ENCODE measurements at regions of chr12 and their contacts with region 1.

Region 1: GRCh38 chr12:122635471-122635870 is 67.7 kb downstream of the HCAR2 start:
- DNase-seq: no peak
- H3K4me3 ChIP-seq: no peak overlapping the region
- H3K27ac ChIP-seq: no peak overlapping the region
- H3K4me1 ChIP-seq: no peaks in the 10 kb centered on the region
- H3K27me3 ChIP-seq: no peaks in the 10 kb centered on the region
- CTCF ChIP-seq: no peak

Region 2: GRCh38 chr12:122293081-122293480 is 342.4 kb before region 1 on chr12:
- CTCF ChIA-PET with region 1: no interaction called
- dilution Hi-C with region 1: no loop called
- in situ Hi-C with region 1: no loop called
- intact Hi-C with region 1: no loop called
- DNase-seq: no peak
- H3K4me3 ChIP-seq: no peak overlapping the region
- H3K27ac ChIP-seq: no peak overlapping the region
- H3K4me1 ChIP-seq: no peaks in the 10 kb centered on the region
- H3K27me3 ChIP-seq: no peaks in the 10 kb centered on the region
- CTCF ChIP-seq: no peak

Region 3: GRCh38 chr12:122593910-122594309 is 41.6 kb before region 1 on chr12:
- CTCF ChIA-PET with region 1: no interaction called
- dilution Hi-C with region 1: loop called (anchors 5 kb)
- in situ Hi-C with region 1: no loop called
- intact Hi-C with region 1: no loop called
- DNase-seq: no peak
- H3K4me3 ChIP-seq: no peak overlapping the region
- H3K27ac ChIP-seq: no peak overlapping the region
- H3K4me1 ChIP-seq: no peaks in the 10 kb centered on the region
- H3K27me3 ChIP-seq: no peaks in the 10 kb centered on the region
- CTCF ChIP-seq: no peak

Region 4: GRCh38 chr12:122752464-122753318 is 117.2 kb after region 1 on chr12 and contains the start of gene DENR:
- CTCF ChIA-PET with region 1: interaction called, 12 read pairs
- dilution Hi-C with region 1: no loop called
- in situ Hi-C with region 1: loop called (anchors 5 kb)
- intact Hi-C with region 1: loop called (anchors 1 kb)
- DNase-seq: peak; percentile 99
- H3K4me3 ChIP-seq: peak within 1 kb of the TSS; percentile 70 to 80 (median 78)
- H3K27ac ChIP-seq: peak within 1 kb of the TSS; percentile 66
- H3K4me1 ChIP-seq: peaks cover 14% of the 10 kb centered on the region
- H3K27me3 ChIP-seq: no peaks in the 10 kb centered on the region
- CTCF ChIP-seq: peak; percentile 88 to 92
- total RNA-seq, gene DENR: 42.5 to 73.0 TPM

Region 5: DNA sequence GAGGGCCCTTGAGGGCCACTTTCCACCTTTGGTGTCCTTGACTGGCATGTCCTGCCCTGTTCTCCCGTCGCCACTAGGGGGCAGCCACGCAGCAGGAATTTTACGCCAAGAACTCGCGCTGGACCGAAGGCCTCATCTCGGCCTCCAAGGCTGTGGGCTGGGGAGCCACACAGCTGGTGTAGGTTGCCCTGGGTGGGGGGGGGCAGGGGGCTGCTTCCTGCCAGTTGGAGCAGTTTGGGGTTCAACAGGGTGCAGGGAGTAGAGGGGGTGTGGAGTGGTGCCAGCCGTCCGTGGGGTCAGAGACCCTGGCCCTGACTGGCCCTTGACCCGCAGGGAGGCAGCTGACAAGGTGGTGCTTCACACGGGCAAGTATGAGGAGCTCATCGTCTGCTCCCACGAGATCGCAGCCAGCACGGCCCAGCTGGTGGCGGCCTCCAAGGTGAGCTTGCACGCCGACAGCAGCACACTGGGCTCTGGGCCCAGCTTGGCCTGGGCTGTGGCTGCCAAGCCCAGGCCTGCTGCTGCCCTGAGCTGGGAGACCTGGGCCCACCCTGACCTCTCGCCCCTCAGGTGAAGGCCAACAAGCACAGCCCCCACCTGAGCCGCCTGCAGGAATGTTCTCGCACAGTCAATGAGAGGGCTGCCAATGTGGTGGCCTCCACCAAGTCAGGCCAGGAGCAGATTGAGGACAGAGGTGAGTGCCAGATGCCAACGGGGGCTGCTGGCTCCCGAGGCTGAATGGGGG is 225.0 kb after region 1 on chr12:
- CTCF ChIA-PET with region 1: no interaction called
- dilution Hi-C with region 1: no loop called
- in situ Hi-C with region 1: no loop called
- intact Hi-C with region 1: loop called (anchors 5 kb)
- DNase-seq: peak; percentile 64
- H3K4me3 ChIP-seq: no peak overlapping the region
- H3K27ac ChIP-seq: no peak overlapping the region
- H3K4me1 ChIP-seq: peaks cover 26% of the 10 kb centered on the region
- H3K27me3 ChIP-seq: no peaks in the 10 kb centered on the region
- CTCF ChIP-seq: peak; percentile 66 to 94

Measured in mammary epithelial cell (primary cell).